ENCODE measurements at regions of chr1 and their contacts with region 1.

Region 1: DNA sequence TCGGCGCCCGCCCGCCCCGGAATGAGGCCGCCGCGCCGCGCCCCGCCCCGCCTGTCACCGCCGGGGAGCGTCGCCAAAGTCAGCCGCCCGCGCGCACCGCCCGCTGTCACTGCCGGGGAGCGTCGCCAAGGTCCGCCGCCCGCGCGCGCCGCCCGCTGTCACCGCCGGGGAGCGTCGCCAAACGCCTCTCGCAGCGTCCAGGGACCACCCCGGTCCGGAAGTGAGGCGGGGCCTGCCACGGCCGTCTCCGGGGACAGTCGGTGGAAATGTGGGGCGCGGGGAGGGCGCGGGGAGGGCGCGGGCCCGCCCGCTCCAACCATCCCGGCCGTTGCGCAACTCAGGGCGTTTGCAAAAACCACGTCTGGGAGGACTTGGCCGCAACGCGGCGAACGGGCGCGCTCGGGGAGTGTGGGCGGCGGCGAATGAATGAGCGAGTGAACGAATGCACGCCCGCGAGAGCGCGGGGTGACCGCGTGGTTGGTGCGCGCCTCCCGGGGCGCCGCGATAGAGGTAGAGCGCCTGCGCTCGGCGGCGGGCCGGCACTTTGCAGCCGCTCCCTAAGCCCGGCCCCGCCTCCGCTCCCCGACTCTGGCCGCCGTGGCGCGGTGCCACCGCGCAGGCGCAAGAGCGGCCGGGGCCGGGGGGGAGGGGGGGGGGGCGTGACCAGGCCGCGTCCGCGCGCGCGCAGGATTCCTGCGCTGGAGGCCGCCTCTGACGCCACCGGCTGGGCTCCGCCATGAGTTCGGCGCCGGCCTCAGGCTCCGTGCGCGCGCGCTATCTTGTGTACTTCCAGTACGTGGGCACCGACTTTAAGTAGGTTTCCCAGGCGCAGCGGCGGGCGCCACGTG is at the starts of genes ACAP3 and PUSL1:
- DNase-seq: peak; percentile 79 to 96 (median 87)
- ATAC-seq: peak; percentile 72
- H3K4me3 ChIP-seq: peak within 1 kb of the TSS; percentile 59 to 94
- H3K4me3 Mint-ChIP-seq: peak within 1 kb of the TSS; percentile 87
- H3K27ac ChIP-seq: peak within 1 kb of the TSS; percentile 79 to 82
- H3K27ac Mint-ChIP-seq: peak within 1 kb of the TSS; percentile 90
- H3K4me1 ChIP-seq: peaks cover 35% of the 10 kb centered on the region
- H3K4me1 Mint-ChIP-seq: peaks cover 20% of the 10 kb centered on the region
- H3K27me3 ChIP-seq: no peaks in the 10 kb centered on the region
- H3K27me3 Mint-ChIP-seq: no peaks in the 10 kb centered on the region
- CTCF ChIP-seq: no peak
- total RNA-seq, gene ACAP3: 46.6 to 47.5 TPM
- total RNA-seq, gene PUSL1: 17.1 to 17.5 TPM

Region 2: GRCh38 chr1:1033009-1033587 is 275.0 kb before region 1 on chr1:
- CTCF ChIA-PET with region 1: no interaction called
- POLR2A ChIA-PET with region 1: no interaction called
- intact Hi-C with region 1: loop called in 1 of 2 experiments (anchors 5 kb)
- DNase-seq: peak; percentile 72 to 93 (median 85)
- ATAC-seq: peak; percentile 94
- H3K4me3 ChIP-seq: peak overlapping the region; percentile 23 to 24
- H3K4me3 Mint-ChIP-seq: peak overlapping the region; percentile 74
- H3K27ac ChIP-seq: no peak overlapping the region
- H3K27ac Mint-ChIP-seq: no peak overlapping the region
- H3K4me1 ChIP-seq: peaks cover 13% of the 10 kb centered on the region
- H3K4me1 Mint-ChIP-seq: peaks cover 7% of the 10 kb centered on the region
- H3K27me3 ChIP-seq: peaks cover 0 to 27% of the 10 kb centered on the region in 2 experiments
- H3K27me3 Mint-ChIP-seq: peaks cover 20% of the 10 kb centered on the region
- CTCF ChIP-seq: peak; percentile 95

Region 3: DNA sequence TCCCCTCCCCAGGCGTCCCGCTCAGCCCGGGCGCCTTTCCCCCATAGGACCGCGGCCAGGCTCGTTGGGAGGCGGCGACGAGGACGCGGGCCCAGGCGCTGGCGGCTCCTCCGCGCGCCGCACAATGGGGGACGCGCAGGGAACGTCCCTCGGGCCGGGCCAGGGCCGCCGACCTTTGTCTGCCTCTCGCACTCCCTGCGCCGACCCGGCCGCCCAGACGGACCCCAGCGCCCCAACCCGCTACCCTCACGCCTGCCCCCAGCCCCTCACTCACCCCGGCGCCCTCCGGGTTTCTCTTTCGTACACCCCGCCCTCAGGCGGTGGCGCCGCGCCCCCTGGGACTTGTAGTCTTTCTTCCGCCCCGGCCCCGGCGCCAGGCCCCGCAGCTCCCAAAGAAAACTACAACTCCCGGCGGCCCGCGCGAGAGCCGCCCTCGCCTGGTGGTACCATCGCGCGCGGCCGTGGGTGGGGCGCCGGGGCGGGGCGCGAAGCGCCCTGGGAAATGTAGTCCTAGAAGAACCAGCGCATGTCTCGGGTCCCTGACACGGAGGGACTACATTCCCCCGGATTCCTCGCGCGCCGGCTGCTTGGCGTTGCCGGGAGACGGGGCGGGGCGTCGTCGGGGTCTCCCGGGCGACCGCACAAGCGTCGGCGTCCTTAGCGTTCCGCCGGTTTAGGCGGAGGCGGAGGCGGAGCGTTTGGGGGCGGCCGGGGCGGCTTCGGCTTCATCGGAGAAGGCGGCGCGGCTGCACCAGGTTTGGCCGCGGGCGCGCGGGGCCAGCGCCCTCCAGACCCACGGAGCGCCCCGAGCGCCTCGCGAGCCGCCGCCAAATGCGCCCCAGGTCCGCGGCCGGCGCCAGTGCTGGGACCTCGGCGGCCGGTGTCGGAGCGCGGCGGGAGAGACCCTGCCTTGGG is 192.1 kb before region 1 on chr1 and contains the start of gene C1orf159:
- CTCF ChIA-PET with region 1: no interaction called
- POLR2A ChIA-PET with region 1: no interaction called
- intact Hi-C with region 1: loop called (anchors 1 kb)
- DNase-seq: peak; percentile 98 to 100 (median 98)
- ATAC-seq: peak; percentile 94
- H3K4me3 ChIP-seq: peak within 1 kb of the TSS; percentile 51 to 66
- H3K4me3 Mint-ChIP-seq: peak within 1 kb of the TSS; percentile 90
- H3K27ac ChIP-seq: peak within 1 kb of the TSS; percentile 47 to 64
- H3K27ac Mint-ChIP-seq: peak within 1 kb of the TSS; percentile 82
- H3K4me1 ChIP-seq: peaks cover 11% of the 10 kb centered on the region
- H3K4me1 Mint-ChIP-seq: peaks cover 13% of the 10 kb centered on the region
- H3K27me3 ChIP-seq: peaks cover 0 to 3% of the 10 kb centered on the region in 2 experiments
- H3K27me3 Mint-ChIP-seq: peaks cover 4% of the 10 kb centered on the region
- CTCF ChIP-seq: no peak
- total RNA-seq, gene C1orf159: 14.3 to 17.6 TPM

Region 4: GRCh38 chr1:1273512-1274298 is 34.4 kb before region 1 on chr1 and contains the start of gene UBE2J2:
- CTCF ChIA-PET with region 1: no interaction called
- POLR2A ChIA-PET with region 1: no interaction called
- intact Hi-C with region 1: loop called (anchors 1 to 5 kb)
- DNase-seq: peak; percentile 86 to 96 (median 93)
- ATAC-seq: peak; percentile 95
- H3K4me3 ChIP-seq: peak within 1 kb of the TSS; percentile 69 to 91
- H3K4me3 Mint-ChIP-seq: peak within 1 kb of the TSS; percentile 88
- H3K27ac ChIP-seq: peak within 1 kb of the TSS; percentile 53 to 63
- H3K27ac Mint-ChIP-seq: peak within 1 kb of the TSS; percentile 89
- H3K4me1 ChIP-seq: peaks cover 39% of the 10 kb centered on the region
- H3K4me1 Mint-ChIP-seq: peaks cover 40% of the 10 kb centered on the region
- H3K27me3 ChIP-seq: no peaks in the 10 kb centered on the region
- H3K27me3 Mint-ChIP-seq: no peaks in the 10 kb centered on the region
- CTCF ChIP-seq: no peak
- total RNA-seq, gene UBE2J2: 46.4 to 50.7 TPM

Region 5: GRCh38 chr1:1374929-1375662 is 67.0 kb after region 1 on chr1 and contains the start of gene AURKAIP1:
- CTCF ChIA-PET with region 1: interaction called, 7 read pairs
- POLR2A ChIA-PET with region 1: interaction called, 4 read pairs
- intact Hi-C with region 1: loop called (anchors 1 kb)
- DNase-seq: peak; percentile 89 to 100 (median 95)
- ATAC-seq: peak; percentile 58
- H3K4me3 ChIP-seq: peak within 1 kb of the TSS; percentile 79 to 91
- H3K4me3 Mint-ChIP-seq: peak within 1 kb of the TSS; percentile 86
- H3K27ac ChIP-seq: peak within 1 kb of the TSS; percentile 83 to 94
- H3K27ac Mint-ChIP-seq: peak within 1 kb of the TSS; percentile 94
- H3K4me1 ChIP-seq: peaks cover 33% of the 10 kb centered on the region
- H3K4me1 Mint-ChIP-seq: peaks cover 33% of the 10 kb centered on the region
- H3K27me3 ChIP-seq: no peaks in the 10 kb centered on the region
- H3K27me3 Mint-ChIP-seq: no peaks in the 10 kb centered on the region
- CTCF ChIP-seq: no peak
- total RNA-seq, gene AURKAIP1: 58.4 to 62.6 TPM

Region 6: DNA sequence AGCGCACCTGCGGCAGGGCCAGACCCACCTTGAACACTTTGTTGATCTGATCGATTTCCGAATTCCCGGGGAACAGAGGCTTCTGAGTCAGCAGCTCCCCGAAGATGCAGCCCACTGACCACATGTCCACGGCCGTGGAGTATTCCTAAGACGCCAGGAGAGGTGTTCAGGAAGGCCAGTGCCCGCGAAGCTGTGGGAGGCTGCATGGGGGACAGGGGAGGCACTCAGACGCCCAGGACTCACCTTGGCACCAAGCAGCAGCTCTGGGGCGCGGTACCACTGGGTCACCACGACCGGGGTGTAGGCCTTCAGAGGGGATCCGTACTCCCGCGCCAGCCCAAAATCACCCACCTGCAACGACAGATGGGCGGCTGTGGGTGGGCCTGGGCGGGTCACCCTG is 395.7 kb after region 1 on chr1:
- CTCF ChIA-PET with region 1: no interaction called
- POLR2A ChIA-PET with region 1: no interaction called
- intact Hi-C with region 1: no loop called
- DNase-seq: peak in 1 of 9 experiments; percentile 45
- ATAC-seq: no peak
- H3K4me3 ChIP-seq: no peak overlapping the region
- H3K4me3 Mint-ChIP-seq: no peak overlapping the region
- H3K27ac ChIP-seq: no peak overlapping the region
- H3K27ac Mint-ChIP-seq: no peak overlapping the region
- H3K4me1 ChIP-seq: no peaks in the 10 kb centered on the region
- H3K4me1 Mint-ChIP-seq: no peaks in the 10 kb centered on the region
- H3K27me3 ChIP-seq: no peaks in the 10 kb centered on the region
- H3K27me3 Mint-ChIP-seq: no peaks in the 10 kb centered on the region
- CTCF ChIP-seq: no peak

Region 7: GRCh38 chr1:1919304-1920056 is 611.3 kb after region 1 on chr1:
- CTCF ChIA-PET with region 1: no interaction called
- POLR2A ChIA-PET with region 1: no interaction called
- intact Hi-C with region 1: loop called in 1 of 2 experiments (anchors 5 kb)
- DNase-seq: peak; percentile 97 to 100 (median 99)
- ATAC-seq: peak; percentile 89
- H3K4me3 ChIP-seq: peak overlapping the region; percentile 39 to 74
- H3K4me3 Mint-ChIP-seq: peak overlapping the region; percentile 47
- H3K27ac ChIP-seq: peak overlapping the region in 1 of 2 experiments; percentile 28
- H3K27ac Mint-ChIP-seq: peak overlapping the region; percentile 5
- H3K4me1 ChIP-seq: peaks cover 17% of the 10 kb centered on the region
- H3K4me1 Mint-ChIP-seq: peaks cover 3% of the 10 kb centered on the region
- H3K27me3 ChIP-seq: no peaks in the 10 kb centered on the region
- H3K27me3 Mint-ChIP-seq: no peaks in the 10 kb centered on the region
- CTCF ChIP-seq: no peak